Esophagus muscularis mucosa (tissue), 4 donors: ENCODE measurements at regions of chr9 and their contacts with region 1.

Region 1: GRCh38 chr9:9612270-9612669 is 1000.5 kb downstream of the PTPRD start:
- DNase-seq: no peak
- H3K4me3 ChIP-seq: no peak overlapping the region
- H3K27ac ChIP-seq: no peak overlapping the region
- H3K4me1 ChIP-seq: no peaks in the 10 kb centered on the region
- H3K27me3 ChIP-seq: no peaks in the 10 kb centered on the region
- CTCF ChIP-seq: no peak
- EP300 ChIP-seq: no peak
- POLR2A ChIP-seq: no peak

Region 2: DNA sequence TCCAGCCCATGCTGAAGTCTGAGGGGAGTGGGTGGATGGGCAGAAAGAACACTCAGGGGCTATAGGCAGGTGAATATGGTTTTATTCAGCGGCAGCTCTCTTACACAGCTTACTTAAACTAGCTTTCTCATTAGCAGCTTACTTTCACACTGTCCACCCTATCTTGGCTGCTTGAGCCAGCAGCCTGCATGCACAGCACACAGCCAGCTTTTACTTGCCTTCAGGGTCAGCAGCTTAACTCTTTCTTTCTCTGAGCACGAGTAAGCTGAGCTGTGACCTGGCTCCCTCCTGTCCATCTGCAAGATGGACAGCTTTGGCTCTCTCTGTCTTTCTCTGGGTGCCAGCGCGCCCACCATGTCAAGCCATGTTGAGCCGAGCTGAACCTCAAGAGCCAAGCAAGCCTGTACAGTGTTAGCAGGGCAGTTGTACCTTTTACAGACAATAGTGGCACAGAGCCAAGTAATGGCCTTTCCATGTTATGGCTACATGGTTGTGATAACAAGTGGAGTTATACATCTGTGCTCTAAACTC is 54.4 kb before region 1 on chr9:
- intact Hi-C with region 1: no loop called
- DNase-seq: no peak
- H3K4me3 ChIP-seq: no peak overlapping the region
- H3K27ac ChIP-seq: no peak overlapping the region
- H3K4me1 ChIP-seq: no peaks in the 10 kb centered on the region
- H3K27me3 ChIP-seq: no peaks in the 10 kb centered on the region
- CTCF ChIP-seq: no peak
- EP300 ChIP-seq: no peak
- POLR2A ChIP-seq: no peak

Region 3: GRCh38 chr9:9778293-9778692 is 166.0 kb after region 1 on chr9:
- intact Hi-C with region 1: no loop called
- DNase-seq: no peak
- H3K4me3 ChIP-seq: no peak overlapping the region
- H3K27ac ChIP-seq: no peak overlapping the region
- H3K4me1 ChIP-seq: no peaks in the 10 kb centered on the region
- H3K27me3 ChIP-seq: no peaks in the 10 kb centered on the region
- CTCF ChIP-seq: no peak
- EP300 ChIP-seq: no peak
- POLR2A ChIP-seq: no peak

Region 4: GRCh38 chr9:9791611-9792010 is 179.3 kb after region 1 on chr9:
- intact Hi-C with region 1: loop called (anchors 1 kb)
- DNase-seq: no peak
- H3K4me3 ChIP-seq: no peak overlapping the region
- H3K27ac ChIP-seq: no peak overlapping the region
- H3K4me1 ChIP-seq: no peaks in the 10 kb centered on the region
- H3K27me3 ChIP-seq: no peaks in the 10 kb centered on the region
- CTCF ChIP-seq: peak; percentile 27 to 35 (median 33)
- EP300 ChIP-seq: no peak
- POLR2A ChIP-seq: no peak

Region 5: GRCh38 chr9:10079284-10079964 is 467.2 kb after region 1 on chr9:
- intact Hi-C with region 1: no loop called
- DNase-seq: no peak
- H3K4me3 ChIP-seq: no peak overlapping the region
- H3K27ac ChIP-seq: no peak overlapping the region
- H3K4me1 ChIP-seq: no peaks in the 10 kb centered on the region
- H3K27me3 ChIP-seq: no peaks in the 10 kb centered on the region
- CTCF ChIP-seq: no peak
- EP300 ChIP-seq: no peak
- POLR2A ChIP-seq: no peak